Endothelial cell of umbilical vein (primary cell): ENCODE measurements at regions of chr3 and their contacts with region 1.

Region 1: GRCh38 chr3:36957862-36958686 is 13.2 kb upstream of the TRANK1 start:
- DNase-seq: peak; percentile 19
- H3K4me3 ChIP-seq: no peak overlapping the region
- H3K27ac ChIP-seq: no peak overlapping the region
- H3K4me1 ChIP-seq: no peaks in the 10 kb centered on the region
- H3K27me3 ChIP-seq: peaks cover 2% of the 10 kb centered on the region in 2 experiments
- CTCF ChIP-seq: no peak
- POLR2A ChIP-seq: no peak

Region 2: DNA sequence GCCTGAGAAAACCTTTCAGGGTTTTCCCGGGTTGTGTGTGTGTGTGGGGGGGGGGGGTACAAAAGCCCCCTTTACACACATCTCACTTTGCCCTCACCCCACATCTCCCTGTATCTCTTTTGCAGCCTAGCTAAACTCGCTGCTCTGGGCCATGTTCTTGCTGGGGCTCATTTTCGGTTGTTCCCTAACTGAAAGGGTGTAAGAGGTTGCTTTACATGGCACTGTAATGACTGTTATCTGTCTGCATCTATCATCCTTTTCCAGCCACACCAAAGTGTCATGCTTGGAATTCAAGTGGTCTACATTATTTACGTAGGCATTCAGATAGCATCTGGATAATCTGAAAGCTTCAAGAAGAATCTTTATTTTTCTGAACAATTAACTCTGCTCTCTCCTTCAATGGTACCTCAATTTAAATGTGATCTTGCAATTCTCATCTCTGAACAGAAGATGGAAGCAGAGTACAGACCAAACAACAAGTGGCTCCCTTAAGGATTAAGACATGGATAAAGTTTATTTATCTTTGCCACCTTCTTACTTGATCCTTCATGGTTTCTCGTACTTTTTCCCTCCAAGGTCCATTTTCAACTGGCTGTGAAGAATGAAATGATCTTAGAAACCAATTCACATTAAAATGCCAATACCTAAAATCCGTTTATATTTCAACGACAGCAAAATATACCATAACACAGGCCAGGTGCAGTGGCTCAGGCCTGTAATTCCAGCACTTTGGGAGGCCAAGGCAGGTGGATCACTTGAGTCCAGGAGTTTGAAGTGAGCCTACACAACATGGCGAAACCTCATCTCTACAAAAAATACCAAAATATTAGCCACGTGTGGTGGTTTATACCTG is 228.6 kb before region 1 on chr3:
- CTCF ChIA-PET with region 1: interaction called, 30 read pairs
- POLR2A ChIA-PET with region 1: no interaction called
- dilution Hi-C with region 1: no loop called
- intact Hi-C with region 1: loop called (anchors 1 kb)
- DNase-seq: peak; percentile 50
- H3K4me3 ChIP-seq: no peak overlapping the region
- H3K27ac ChIP-seq: no peak overlapping the region
- H3K4me1 ChIP-seq: no peaks in the 10 kb centered on the region
- H3K27me3 ChIP-seq: no peaks in the 10 kb centered on the region
- CTCF ChIP-seq: peak; percentile 36 to 43
- POLR2A ChIP-seq: no peak

Region 3: DNA sequence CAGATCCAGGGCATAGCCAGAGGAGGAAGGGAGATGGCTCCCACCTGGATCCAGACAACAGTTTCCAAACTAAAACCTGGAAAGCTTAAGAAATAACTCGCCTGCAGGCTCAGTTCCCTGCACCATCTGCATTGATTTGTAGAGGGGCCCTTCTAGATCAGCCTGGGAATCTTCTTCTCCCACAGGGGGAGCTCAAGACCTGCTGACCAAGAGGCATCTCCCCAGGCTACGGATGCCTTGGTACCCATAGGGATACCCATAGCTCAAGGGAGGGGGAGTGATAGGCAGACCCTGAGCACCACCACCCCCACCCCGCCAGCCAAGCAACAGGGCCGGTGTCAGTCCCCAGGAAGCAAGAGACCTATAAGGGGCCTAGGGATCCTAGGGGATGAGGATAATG is 165.7 kb before region 1 on chr3:
- CTCF ChIA-PET with region 1: interaction called, 71 read pairs
- POLR2A ChIA-PET with region 1: no interaction called
- dilution Hi-C with region 1: no loop called
- intact Hi-C with region 1: loop called (anchors 1 kb)
- DNase-seq: peak; percentile 26
- H3K4me3 ChIP-seq: no peak overlapping the region
- H3K27ac ChIP-seq: no peak overlapping the region
- H3K4me1 ChIP-seq: no peaks in the 10 kb centered on the region
- H3K27me3 ChIP-seq: peaks cover 0 to 6% of the 10 kb centered on the region in 2 experiments
- CTCF ChIP-seq: peak; percentile 27 to 49
- POLR2A ChIP-seq: no peak

Region 4: DNA sequence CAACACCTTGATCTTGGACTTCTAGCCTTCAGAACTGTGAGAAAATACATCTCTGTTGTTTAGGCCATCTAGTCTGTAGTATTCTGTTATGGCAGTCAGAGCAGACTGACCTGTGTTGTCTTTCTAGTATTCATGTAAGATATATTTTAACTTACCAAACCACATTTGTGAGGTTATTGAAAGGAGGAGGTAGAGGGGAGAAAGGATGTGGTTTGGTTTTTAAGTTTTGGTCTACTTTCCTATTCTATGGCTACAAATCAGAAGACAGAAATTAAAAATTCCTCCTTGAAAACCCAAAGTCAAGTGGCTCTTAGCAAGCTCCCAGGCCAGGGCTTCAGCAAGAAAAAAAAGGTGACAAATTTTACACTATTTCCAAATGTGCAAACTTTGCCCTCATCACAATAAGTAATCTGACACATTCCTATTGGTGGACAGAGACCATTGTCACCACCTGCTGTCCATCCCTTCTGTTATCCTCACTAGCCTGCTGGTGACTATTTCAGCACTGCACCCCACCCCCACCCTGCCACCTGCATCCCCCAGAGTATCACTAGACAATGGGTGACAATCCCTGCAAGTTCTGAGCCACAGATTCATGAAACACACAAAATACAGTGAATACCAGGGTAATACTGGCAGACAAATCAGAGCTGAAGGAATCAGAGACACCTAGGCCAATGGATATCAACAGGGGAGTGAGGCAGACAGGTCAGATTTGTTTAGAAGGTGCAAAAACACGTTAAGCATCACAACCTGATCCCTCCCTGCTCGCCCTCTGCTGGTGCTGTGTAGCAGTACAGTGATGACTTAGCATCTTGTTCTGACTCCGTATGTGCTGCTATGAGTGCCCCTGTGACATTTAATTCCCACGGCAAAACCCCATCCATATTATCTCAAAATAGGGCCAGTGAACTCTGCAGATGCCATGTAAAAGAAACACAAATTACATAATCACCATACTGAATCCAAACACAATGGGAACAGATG is 114.7 kb before region 1 on chr3:
- CTCF ChIA-PET with region 1: interaction called, 11 read pairs
- POLR2A ChIA-PET with region 1: no interaction called
- dilution Hi-C with region 1: no loop called
- intact Hi-C with region 1: no loop called
- DNase-seq: peak; percentile 19
- H3K4me3 ChIP-seq: no peak overlapping the region
- H3K27ac ChIP-seq: no peak overlapping the region
- H3K4me1 ChIP-seq: no peaks in the 10 kb centered on the region
- H3K27me3 ChIP-seq: no peaks in the 10 kb centered on the region
- CTCF ChIP-seq: peak; percentile 41 to 54
- POLR2A ChIP-seq: no peak

Region 5: DNA sequence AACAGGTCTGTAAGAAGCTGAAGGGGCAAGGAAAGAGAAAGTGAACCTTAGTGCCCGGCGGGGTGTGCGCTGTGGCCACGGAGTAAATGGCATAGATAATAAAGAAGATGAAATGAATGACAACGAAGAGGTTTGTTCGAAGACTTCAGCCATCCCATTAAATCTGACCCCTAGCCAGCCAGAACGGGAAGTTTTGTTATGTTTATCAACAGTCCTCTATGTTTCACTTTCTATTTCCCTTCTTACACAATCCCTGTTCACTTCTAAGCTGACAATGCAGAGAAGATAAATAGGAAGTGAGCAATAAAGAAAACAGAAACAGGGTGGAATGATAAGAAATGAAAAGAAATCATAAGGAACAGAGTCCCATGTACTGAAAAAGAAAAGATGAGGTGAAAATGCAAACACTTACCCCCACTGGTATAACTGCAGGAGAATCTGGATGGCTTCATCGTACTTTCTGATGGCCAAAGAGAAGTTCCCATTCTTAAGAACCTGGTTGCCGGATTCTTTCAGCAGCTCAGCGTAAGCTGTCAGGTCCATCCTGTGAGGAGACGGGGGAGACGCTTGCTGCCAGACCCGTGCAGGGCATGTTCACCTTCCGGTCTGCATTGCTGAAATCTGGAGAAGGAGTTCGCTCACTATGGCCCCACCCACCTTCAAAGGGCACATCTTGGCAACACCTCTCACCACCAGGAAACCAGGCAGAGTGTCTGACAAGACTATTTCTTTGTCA is 50.0 kb before region 1 on chr3:
- CTCF ChIA-PET with region 1: interaction called, 71 read pairs
- POLR2A ChIA-PET with region 1: no interaction called
- dilution Hi-C with region 1: no loop called
- intact Hi-C with region 1: loop called (anchors 2 kb)
- DNase-seq: peak; percentile 90
- H3K4me3 ChIP-seq: peak overlapping the region; percentile 12 to 88 (median 65)
- H3K27ac ChIP-seq: peak overlapping the region; percentile 80
- H3K4me1 ChIP-seq: peaks cover 25% of the 10 kb centered on the region
- H3K27me3 ChIP-seq: no peaks in the 10 kb centered on the region
- CTCF ChIP-seq: no peak
- POLR2A ChIP-seq: peak; percentile 10

Region 6: DNA sequence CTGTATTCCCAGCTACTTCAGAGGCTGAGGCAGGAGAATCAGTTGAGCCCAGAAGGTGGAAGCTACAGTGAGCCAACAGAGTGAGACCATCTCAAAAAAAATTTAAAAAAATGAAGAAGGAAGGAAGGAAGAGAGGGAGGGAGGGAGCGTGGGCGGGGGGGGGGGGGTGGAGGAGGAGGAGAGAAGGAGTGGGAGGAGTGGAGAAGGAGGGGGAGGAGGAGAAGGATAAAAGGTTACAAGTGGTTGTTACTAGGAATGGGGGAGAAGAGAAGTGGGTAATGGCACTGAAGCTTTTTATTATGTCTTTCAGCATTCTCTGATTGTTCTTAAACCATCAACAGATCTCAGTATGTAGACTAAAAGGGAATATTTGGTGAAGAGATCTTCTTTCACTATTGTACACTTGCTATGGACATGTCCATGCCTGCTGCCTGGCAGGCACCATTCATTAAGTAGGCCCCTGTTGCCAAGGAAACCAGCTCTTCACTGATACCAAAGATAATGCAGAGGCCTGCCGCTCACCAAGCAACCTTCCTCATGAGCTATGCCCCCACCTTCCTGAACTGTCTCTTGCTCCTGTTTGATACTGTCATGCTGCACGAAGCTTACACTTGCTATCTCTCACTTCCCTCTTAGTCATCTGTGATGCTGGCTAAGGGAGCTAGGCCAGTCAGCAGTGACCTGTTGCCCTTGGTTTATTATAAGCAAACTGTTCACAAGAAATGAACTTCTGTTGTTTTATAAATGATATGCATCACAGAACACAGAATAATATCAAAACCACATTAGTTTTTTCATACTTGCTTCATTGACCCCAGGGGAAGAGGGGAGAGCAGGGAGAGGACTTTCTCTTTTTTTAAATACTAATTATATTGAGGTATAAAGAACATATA is 11.7 kb after region 1 on chr3:
- CTCF ChIA-PET with region 1: interaction called, 14 read pairs
- POLR2A ChIA-PET with region 1: interaction called, 3 read pairs
- dilution Hi-C with region 1: no loop called
- intact Hi-C with region 1: no loop called
- DNase-seq: peak; percentile 66
- H3K4me3 ChIP-seq: no peak overlapping the region
- H3K27ac ChIP-seq: no peak overlapping the region
- H3K4me1 ChIP-seq: peaks cover 9% of the 10 kb centered on the region
- H3K27me3 ChIP-seq: no peaks in the 10 kb centered on the region
- CTCF ChIP-seq: no peak
- POLR2A ChIP-seq: no peak

Region 7: GRCh38 chr3:37064747-37065146 is 106.7 kb after region 1 on chr3:
- CTCF ChIA-PET with region 1: no interaction called
- POLR2A ChIA-PET with region 1: no interaction called
- dilution Hi-C with region 1: no loop called
- intact Hi-C with region 1: no loop called
- DNase-seq: no peak
- H3K4me3 ChIP-seq: no peak overlapping the region
- H3K27ac ChIP-seq: no peak overlapping the region
- H3K4me1 ChIP-seq: peaks cover 5% of the 10 kb centered on the region
- H3K27me3 ChIP-seq: no peaks in the 10 kb centered on the region
- CTCF ChIP-seq: no peak
- POLR2A ChIP-seq: no peak

Region 8: GRCh38 chr3:37114251-37115145 is 156.4 kb after region 1 on chr3:
- CTCF ChIA-PET with region 1: no interaction called
- POLR2A ChIA-PET with region 1: no interaction called
- dilution Hi-C with region 1: no loop called
- intact Hi-C with region 1: no loop called
- DNase-seq: peak; percentile 82
- H3K4me3 ChIP-seq: no peak overlapping the region
- H3K27ac ChIP-seq: peak overlapping the region; percentile 48
- H3K4me1 ChIP-seq: peaks cover 19% of the 10 kb centered on the region
- H3K27me3 ChIP-seq: no peaks in the 10 kb centered on the region
- CTCF ChIP-seq: no peak
- POLR2A ChIP-seq: no peak

Region 9: GRCh38 chr3:37210230-37210629 is 252.2 kb after region 1 on chr3:
- CTCF ChIA-PET with region 1: no interaction called
- POLR2A ChIA-PET with region 1: no interaction called
- dilution Hi-C with region 1: no loop called
- intact Hi-C with region 1: loop called (anchors 1 kb)
- DNase-seq: no peak
- H3K4me3 ChIP-seq: no peak overlapping the region
- H3K27ac ChIP-seq: no peak overlapping the region
- H3K4me1 ChIP-seq: no peaks in the 10 kb centered on the region
- H3K27me3 ChIP-seq: no peaks in the 10 kb centered on the region
- CTCF ChIP-seq: no peak
- POLR2A ChIP-seq: no peak